CD4-positive, alpha-beta T cell (primary cell): ENCODE measurements at regions of chr11 and their contacts with region 1.

Region 1: GRCh38 chr11:17504330-17505107 is 27.9 kb upstream of the ABCC8 start:
- DNase-seq: peak; percentile 63 to 82 (median 73)
- ATAC-seq: peak; percentile 83
- H3K4me3 ChIP-seq: no peak overlapping the region
- H3K4me3 Mint-ChIP-seq: no peak overlapping the region
- H3K27ac ChIP-seq: no peak overlapping the region
- H3K27ac Mint-ChIP-seq: no peak overlapping the region
- H3K4me1 ChIP-seq: no peaks in the 10 kb centered on the region
- H3K4me1 Mint-ChIP-seq: no peaks in the 10 kb centered on the region
- H3K27me3 ChIP-seq: no peaks in the 10 kb centered on the region
- H3K27me3 Mint-ChIP-seq: peaks cover 14% of the 10 kb centered on the region
- CTCF ChIP-seq: peak; percentile 87

Region 2: DNA sequence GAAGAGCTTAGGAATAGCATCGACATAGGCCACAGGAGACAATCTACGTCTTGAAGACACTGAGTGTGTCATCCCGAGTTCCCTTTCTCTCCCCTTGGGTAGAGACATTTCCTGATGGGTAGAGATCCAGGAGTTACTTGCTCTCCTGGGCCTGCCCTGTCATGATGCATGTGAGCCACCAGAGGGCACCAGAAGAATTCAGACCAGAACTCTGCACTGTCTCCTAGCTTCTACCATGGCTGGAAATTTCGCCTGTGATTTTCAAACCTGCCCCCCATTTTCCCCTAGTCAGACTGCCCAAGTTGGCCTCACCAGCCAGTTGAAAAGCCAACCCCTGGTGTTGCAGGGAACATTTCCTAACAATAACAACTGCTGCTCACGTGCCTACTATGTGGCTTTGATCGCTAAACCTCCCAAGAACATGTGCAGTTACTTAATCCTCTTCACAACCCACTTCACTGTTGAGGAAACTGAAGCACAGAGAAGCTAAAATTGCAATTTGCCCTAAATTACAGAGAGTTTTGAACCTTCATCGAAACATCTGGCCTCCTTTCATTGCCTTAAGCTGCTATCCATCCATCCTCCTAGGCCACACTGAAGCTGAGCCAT is 718.9 kb before region 1 on chr11:
- CTCF ChIA-PET with region 1: no interaction called
- POLR2A ChIA-PET with region 1: no interaction called
- intact Hi-C with region 1: loop called in 1 of 2 experiments (anchors 5 kb)
- DNase-seq: peak; percentile 12 to 73 (median 38)
- ATAC-seq: peak; percentile 79
- H3K4me3 ChIP-seq: no peak overlapping the region
- H3K4me3 Mint-ChIP-seq: no peak overlapping the region
- H3K27ac ChIP-seq: no peak overlapping the region
- H3K27ac Mint-ChIP-seq: no peak overlapping the region
- H3K4me1 ChIP-seq: peaks cover 3% of the 10 kb centered on the region
- H3K4me1 Mint-ChIP-seq: no peaks in the 10 kb centered on the region
- H3K27me3 ChIP-seq: no peaks in the 10 kb centered on the region
- H3K27me3 Mint-ChIP-seq: no peaks in the 10 kb centered on the region
- CTCF ChIP-seq: peak; percentile 82

Region 3: DNA sequence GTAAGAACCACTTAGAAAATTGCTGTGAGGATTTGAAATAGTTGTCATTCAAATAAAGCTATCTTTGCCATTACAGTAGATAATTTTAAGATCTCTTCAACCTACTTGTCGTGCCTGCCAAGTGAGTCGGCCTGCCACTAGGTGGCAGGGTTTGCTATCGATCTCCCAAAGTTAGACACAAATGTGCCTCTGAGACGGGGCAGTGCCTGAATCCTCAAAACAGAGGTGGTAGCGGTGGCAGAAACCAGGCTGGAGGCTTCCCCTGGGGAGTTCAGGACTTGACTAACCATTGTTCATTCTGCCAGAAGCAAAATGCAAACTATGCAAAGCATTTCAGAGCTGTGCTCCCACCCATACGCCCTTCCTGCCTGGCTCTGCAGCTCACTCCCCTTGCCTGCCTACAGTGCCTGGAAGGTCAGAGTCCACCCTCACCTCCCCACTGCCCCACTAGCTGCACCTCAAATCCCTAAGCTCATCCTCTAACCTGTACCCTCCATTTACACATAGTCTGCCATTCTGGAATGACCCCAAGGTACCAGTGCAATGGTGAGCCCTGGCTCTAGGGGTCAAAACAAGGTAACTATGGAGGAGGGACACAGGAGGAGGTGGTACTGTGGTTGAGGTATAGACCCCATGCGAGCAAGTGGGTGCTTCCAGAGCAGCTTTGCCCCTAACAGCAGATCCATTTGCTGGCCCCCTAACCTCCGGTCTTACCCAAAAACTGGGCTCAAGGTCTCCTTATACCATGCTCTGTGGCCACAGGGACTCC is 684.0 kb before region 1 on chr11:
- CTCF ChIA-PET with region 1: no interaction called
- POLR2A ChIA-PET with region 1: no interaction called
- intact Hi-C with region 1: loop called in 1 of 2 experiments (anchors 2 kb)
- DNase-seq: peak; percentile 25 to 69 (median 50)
- ATAC-seq: no peak
- H3K4me3 ChIP-seq: no peak overlapping the region
- H3K4me3 Mint-ChIP-seq: no peak overlapping the region
- H3K27ac ChIP-seq: no peak overlapping the region
- H3K27ac Mint-ChIP-seq: no peak overlapping the region
- H3K4me1 ChIP-seq: peaks cover 5% of the 10 kb centered on the region
- H3K4me1 Mint-ChIP-seq: peaks cover 10% of the 10 kb centered on the region
- H3K27me3 ChIP-seq: no peaks in the 10 kb centered on the region
- H3K27me3 Mint-ChIP-seq: no peaks in the 10 kb centered on the region
- CTCF ChIP-seq: peak; percentile 80

Region 4: GRCh38 chr11:16935518-16936302 is 568.8 kb before region 1 on chr11:
- CTCF ChIA-PET with region 1: no interaction called
- POLR2A ChIA-PET with region 1: no interaction called
- intact Hi-C with region 1: loop called in 1 of 2 experiments (anchors 5 kb)
- DNase-seq: peak in 4 of 14 experiments; percentile 19 to 42 (median 31)
- ATAC-seq: no peak
- H3K4me3 ChIP-seq: no peak overlapping the region
- H3K4me3 Mint-ChIP-seq: no peak overlapping the region
- H3K27ac ChIP-seq: no peak overlapping the region
- H3K27ac Mint-ChIP-seq: no peak overlapping the region
- H3K4me1 ChIP-seq: no peaks in the 10 kb centered on the region
- H3K4me1 Mint-ChIP-seq: no peaks in the 10 kb centered on the region
- H3K27me3 ChIP-seq: no peaks in the 10 kb centered on the region
- H3K27me3 Mint-ChIP-seq: peaks cover 8% of the 10 kb centered on the region
- CTCF ChIP-seq: peak; percentile 25

Region 5: DNA sequence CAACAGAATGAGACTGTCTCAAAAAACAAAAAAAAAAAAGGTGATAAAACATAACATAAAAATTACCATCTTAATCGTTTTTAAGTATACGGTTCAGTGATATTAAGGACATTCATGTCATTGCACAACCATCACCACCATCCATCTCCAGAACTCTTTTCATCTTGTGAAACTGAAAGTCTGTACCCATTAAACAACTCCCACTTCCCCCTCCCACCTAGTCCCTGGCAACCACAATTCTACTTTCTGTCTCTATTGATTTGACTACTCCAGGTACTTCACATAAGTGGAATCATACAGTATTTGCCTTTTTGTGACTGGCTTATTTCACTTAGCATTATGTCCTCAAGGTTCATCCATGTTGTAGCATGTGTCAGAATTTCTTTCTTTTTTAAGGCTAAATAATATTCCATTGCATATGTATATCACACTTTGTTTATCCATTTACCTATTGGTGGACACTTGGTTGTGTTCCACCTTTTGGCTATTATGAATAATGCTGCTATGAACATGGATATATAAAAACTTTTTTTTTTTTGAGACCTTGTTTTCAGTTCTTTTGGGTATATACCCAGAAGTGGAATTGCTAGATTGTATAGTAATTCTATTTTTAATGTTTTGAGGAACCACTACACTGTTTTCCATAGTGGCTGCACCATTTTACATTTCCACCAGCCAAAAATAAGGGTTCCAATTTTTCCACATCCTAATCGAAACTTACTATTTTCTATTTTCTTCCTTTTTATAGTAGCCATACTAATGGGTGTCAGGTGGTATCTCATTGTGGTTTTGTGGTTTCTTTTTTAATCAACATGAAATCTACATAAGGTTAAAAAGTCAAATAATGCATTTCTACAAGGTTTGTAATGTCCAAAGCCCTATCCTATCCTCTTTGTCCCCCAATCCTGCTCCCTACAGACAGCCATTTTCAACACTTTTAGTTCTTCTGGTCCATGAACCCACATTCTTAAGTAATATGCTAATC is 273.4 kb before region 1 on chr11:
- CTCF ChIA-PET with region 1: interaction called, 18 read pairs
- POLR2A ChIA-PET with region 1: interaction called, 4 read pairs
- intact Hi-C with region 1: loop called (anchors 1 kb)
- DNase-seq: peak in 3 of 14 experiments; percentile 50 to 57 (median 54)
- ATAC-seq: peak; percentile 68
- H3K4me3 ChIP-seq: no peak overlapping the region
- H3K4me3 Mint-ChIP-seq: no peak overlapping the region
- H3K27ac ChIP-seq: no peak overlapping the region
- H3K27ac Mint-ChIP-seq: no peak overlapping the region
- H3K4me1 ChIP-seq: peaks cover 9% of the 10 kb centered on the region
- H3K4me1 Mint-ChIP-seq: peaks cover 16% of the 10 kb centered on the region
- H3K27me3 ChIP-seq: no peaks in the 10 kb centered on the region
- H3K27me3 Mint-ChIP-seq: no peaks in the 10 kb centered on the region
- CTCF ChIP-seq: no peak

Region 6: GRCh38 chr11:17384002-17384511 is 120.5 kb before region 1 on chr11:
- CTCF ChIA-PET with region 1: interaction called, 13 read pairs
- POLR2A ChIA-PET with region 1: no interaction called
- intact Hi-C with region 1: loop called (anchors 1 kb)
- DNase-seq: peak; percentile 65 to 90 (median 74)
- ATAC-seq: peak; percentile 65
- H3K4me3 ChIP-seq: no peak overlapping the region
- H3K4me3 Mint-ChIP-seq: no peak overlapping the region
- H3K27ac ChIP-seq: no peak overlapping the region
- H3K27ac Mint-ChIP-seq: no peak overlapping the region
- H3K4me1 ChIP-seq: peaks cover 10% of the 10 kb centered on the region
- H3K4me1 Mint-ChIP-seq: no peaks in the 10 kb centered on the region
- H3K27me3 ChIP-seq: no peaks in the 10 kb centered on the region
- H3K27me3 Mint-ChIP-seq: no peaks in the 10 kb centered on the region
- CTCF ChIP-seq: peak; percentile 88